ENCODE measurements at regions of chr1 and their contacts with region 1.

Region 1: DNA sequence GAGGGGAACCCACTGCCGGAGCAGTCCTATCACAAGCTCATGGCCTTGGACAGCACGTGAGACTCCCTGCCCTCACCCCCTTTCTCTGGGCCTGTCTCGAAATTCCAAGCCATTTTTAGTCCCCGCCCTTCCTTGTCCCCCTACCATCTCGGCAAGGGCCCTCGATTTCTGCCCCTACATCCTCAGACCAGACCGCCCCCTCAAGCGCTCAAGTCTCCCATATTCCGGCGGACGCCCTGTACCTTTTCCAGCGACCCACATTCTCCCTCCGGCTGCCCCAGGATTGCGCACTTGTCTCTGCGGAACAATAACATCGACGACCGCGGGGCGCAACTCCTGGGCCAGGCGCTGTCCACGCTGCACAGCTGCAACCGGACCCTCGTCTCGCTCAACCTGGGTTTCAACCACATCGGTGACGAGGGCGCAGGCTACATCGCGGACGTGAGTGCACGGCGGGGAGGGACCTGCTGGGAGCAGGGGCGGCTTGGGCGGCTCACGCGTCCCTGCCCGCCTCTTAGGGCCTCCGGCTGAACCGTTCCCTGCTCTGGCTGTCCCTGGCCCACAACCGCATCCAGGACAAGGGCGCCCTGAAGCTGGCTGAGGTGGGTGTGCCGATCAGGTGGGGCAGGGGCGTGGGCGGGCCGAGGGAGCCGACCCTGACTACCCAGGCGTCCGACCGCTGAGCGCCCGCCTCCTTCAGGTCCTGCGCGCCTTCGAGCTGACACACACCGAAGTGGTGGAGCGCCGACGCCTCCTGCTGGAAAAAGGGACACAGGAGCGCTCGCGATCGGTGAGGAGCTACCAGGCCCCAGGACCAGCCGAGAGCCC is 7.0 kb downstream of the LRRC71 start:
- DNase-seq: peak; percentile 76
- H3K4me3 ChIP-seq: peak overlapping the region; percentile 18
- H3K27ac ChIP-seq: no peak overlapping the region
- H3K4me1 ChIP-seq: no peaks in the 10 kb centered on the region
- H3K27me3 ChIP-seq: peaks cover 49% of the 10 kb centered on the region
- CTCF ChIP-seq: peak; percentile 57

Region 2: DNA sequence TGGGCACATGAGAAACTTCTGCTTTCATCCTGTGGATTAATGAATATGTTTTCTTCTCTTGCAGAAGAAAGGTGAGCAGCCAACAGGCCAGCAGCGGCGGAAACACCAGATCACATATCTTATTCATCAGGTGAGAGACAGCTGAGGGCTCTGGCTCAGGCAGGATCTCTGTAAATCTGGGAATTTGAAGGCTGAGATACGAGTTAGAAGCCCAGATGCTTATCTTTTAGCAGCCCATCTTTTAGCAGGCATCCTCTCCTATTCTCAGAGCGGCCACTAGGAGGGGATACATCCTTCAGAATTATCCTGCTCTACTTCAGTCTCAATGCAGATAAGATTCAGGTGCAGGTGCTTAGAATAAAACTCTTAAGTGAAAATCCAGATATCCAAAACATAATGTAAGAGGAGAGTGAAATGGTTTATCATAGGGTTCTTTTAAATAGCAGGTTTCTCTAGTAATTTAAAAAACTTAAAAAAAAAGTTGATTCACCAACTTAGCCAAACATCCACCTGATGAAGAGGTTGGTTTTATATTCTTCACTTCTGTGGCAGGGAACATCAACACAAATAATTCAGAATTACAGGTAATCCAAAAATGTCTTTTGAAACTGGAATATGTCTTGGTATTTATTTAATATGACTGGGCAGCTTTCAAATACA is 130.1 kb before region 1 on chr1:
- intact Hi-C with region 1: loop called (anchors 10 kb)
- DNase-seq: peak; percentile 50
- H3K4me3 ChIP-seq: no peak overlapping the region
- H3K27ac ChIP-seq: no peak overlapping the region
- H3K4me1 ChIP-seq: no peaks in the 10 kb centered on the region
- H3K27me3 ChIP-seq: no peaks in the 10 kb centered on the region
- CTCF ChIP-seq: peak; percentile 86

Region 3: DNA sequence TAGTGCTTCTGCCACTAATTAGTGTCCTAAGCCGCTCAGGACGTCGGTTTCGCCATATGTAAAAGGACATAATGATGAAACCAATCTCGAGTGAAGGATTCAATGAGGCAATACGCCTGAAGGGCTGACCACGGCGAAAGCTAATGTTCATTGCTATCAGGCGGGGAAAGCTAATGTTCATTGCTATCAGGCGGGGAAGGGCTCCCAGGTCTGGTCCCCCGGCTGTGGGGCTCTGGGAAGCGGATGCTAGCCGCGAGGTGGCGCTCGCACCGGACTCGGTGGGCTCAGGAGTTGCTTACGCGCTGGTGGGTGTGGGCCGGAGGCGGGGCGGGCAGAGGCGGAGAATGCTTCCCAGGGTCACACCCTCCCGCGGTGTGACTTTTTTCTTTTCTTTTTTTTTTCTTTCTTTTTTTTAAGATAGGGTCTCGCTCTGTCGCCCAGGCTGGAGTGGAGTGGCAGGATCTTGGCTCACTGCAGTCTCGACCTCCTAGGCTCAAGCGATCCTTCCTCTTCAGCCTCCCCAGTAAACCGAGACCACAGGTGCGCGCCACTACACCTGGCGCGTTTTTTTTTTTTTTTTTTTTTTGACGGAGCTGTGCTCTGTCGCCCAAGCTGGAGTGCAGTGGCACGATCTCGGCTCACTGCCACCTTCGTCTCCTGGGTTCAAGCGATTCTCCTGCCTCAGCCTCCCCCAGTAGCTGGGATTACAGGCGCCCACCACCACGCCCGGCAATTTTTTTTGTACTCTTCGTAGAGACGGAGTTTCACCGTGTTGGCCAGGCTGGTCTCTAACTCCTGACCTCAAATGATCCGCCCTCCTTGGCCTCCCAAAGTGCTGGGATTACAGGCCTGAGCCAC is 35.0 kb before region 1 on chr1:
- intact Hi-C with region 1: loop called (anchors 5 kb)
- DNase-seq: peak; percentile 94
- H3K4me3 ChIP-seq: no peak overlapping the region
- H3K27ac ChIP-seq: no peak overlapping the region
- H3K4me1 ChIP-seq: no peaks in the 10 kb centered on the region
- H3K27me3 ChIP-seq: peaks cover 16% of the 10 kb centered on the region
- CTCF ChIP-seq: peak; percentile 83